PC-3 (cell line): ENCODE measurements at regions of chr3 and their contacts with region 1.

Region 1: DNA sequence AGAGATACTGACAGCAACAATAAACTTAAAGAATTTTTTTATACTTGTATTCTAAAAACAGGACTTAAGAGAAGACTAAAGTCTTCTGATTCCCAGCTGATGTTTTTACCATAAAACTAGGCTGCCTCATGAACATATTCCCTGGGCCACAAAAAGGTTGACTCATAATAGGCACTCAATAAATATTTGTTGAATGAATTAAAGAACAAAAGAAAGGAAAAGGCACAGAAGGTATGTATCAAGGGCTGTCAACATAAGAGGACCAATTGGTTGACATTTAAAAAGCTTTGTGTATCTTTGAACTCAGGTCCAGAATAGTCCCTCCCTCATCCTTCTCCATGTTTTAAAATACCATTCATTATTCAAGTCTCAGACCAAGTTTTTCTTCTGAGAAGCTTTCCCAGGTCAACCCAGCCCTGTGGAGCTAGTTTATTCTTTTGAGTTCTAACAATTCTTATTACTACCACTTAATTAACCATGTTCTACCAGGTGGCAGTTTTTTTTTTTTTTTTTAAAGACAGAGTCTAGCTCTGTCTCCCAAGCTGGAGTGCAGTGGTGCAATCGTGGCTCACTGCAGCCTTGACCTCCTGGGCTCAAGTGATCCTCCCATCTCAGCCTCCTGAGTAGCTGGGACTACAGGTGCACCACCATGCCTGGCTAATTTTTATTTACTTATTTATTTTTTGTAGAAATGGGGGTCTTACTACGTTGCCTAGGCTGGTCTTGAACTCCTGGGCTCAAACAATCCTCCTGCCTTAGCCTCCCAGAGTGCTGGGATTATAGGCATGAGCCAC is 17.5 kb upstream of the ARHGEF3 start:
- DNase-seq: peak; percentile 59
- ATAC-seq: peak; percentile 91
- H3K4me3 ChIP-seq: no peak overlapping the region
- H3K27ac ChIP-seq: no peak overlapping the region
- H3K4me1 ChIP-seq: peaks cover 16% of the 10 kb centered on the region
- H3K27me3 ChIP-seq: no peaks in the 10 kb centered on the region
- CTCF ChIP-seq: no peak

Region 2: GRCh38 chr3:56839784-56840715 is 20.8 kb after region 1 on chr3:
- CTCF ChIA-PET with region 1: no interaction called
- POLR2A ChIA-PET with region 1: no interaction called
- intact Hi-C with region 1: loop called (anchors 2 kb)
- DNase-seq: peak; percentile 92
- ATAC-seq: peak; percentile 94
- H3K4me3 ChIP-seq: peak overlapping the region; percentile 11; the same call in 1 of the 2 replicates
- H3K27ac ChIP-seq: peak overlapping the region; percentile 87
- H3K4me1 ChIP-seq: peaks cover 34% of the 10 kb centered on the region
- H3K27me3 ChIP-seq: no peaks in the 10 kb centered on the region
- CTCF ChIP-seq: no peak

Region 3: DNA sequence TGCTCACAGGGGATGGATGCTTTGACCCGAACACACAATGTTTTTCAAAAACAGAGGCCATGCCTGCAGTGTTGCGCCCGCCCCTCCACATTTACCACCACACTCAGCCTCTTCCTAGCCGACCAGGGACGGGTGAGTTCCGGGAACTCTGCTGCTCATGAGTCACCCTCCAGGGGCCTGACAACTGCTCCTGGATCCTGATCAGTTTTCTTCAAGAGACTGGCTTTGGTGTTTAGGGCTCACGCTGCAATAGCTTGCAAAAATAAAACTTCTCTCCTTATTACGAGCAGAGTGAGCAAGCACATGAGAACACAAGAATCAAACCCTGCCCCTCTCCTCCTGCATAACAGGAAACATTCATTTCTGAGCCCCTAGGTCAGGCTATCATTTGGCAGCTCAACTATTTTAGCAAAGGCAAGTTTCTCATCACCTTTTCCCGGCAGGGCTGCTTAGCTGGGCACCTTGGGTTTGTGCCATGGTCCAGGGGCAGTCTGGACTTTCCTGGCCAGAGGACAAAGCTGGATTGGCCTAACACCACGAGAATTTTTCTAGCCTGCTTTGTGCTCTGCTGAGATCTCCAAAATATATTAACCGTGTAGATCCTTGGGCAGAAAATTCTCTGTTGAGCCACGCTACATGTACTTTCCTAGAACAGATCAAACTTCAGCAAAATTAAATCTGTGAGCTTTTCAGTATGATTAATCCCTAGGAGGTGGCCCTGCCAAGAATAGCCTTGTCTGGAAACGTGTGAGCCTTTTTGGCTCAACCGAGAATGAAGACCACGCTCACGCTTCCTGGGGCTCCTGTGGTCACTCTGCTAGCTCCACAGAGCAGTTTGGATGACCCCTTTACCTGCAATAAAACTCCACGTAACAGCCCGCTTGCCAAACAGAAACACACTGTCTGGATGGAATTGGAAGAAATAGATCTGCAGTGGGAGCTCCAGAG is 188.6 kb after region 1 on chr3:
- CTCF ChIA-PET with region 1: no interaction called
- POLR2A ChIA-PET with region 1: no interaction called
- intact Hi-C with region 1: no loop called
- DNase-seq: peak; percentile 83
- ATAC-seq: peak; percentile 92
- H3K4me3 ChIP-seq: peak overlapping the region; percentile 45; the same call in 1 of the 2 replicates
- H3K27ac ChIP-seq: peak overlapping the region; percentile 90
- H3K4me1 ChIP-seq: peaks cover 30% of the 10 kb centered on the region
- H3K27me3 ChIP-seq: no peaks in the 10 kb centered on the region
- CTCF ChIP-seq: no peak